Transverse colon (tissue), 4 donors: ENCODE measurements at regions of chr3 and their contacts with region 1.

Region 1: GRCh38 chr3:197256836-197257444 is 41.5 kb downstream of the DLG1 start:
- DNase-seq: peak; percentile 19
- H3K4me3 ChIP-seq: no peak overlapping the region
- H3K27ac ChIP-seq: no peak overlapping the region
- H3K4me1 ChIP-seq: peaks cover 0 to 28% (median 13%) of the 10 kb centered on the region in 4 donors
- H3K27me3 ChIP-seq: no peaks in the 10 kb centered on the region
- CTCF ChIP-seq: peak; percentile 55 to 74 (median 71)
- EP300 ChIP-seq: no peak
- POLR2A ChIP-seq: no peak

Region 2: GRCh38 chr3:197501879-197502620 is 245.1 kb after region 1 on chr3:
- in situ Hi-C with region 1: loop called in 3 of 4 experiments (anchors 5 to 25 kb)
- intact Hi-C with region 1: no loop called
- DNase-seq: peak; percentile 88
- H3K4me3 ChIP-seq: no peak overlapping the region
- H3K27ac ChIP-seq: peak overlapping the region; percentile 71 to 83 (median 81)
- H3K4me1 ChIP-seq: peaks cover 9 to 57% (median 47%) of the 10 kb centered on the region in 4 donors
- H3K27me3 ChIP-seq: no peaks in the 10 kb centered on the region
- CTCF ChIP-seq: peak; percentile 57 to 92 (median 68)
- EP300 ChIP-seq: no peak
- POLR2A ChIP-seq: no peak

Region 3: GRCh38 chr3:197511130-197511529 is 254.2 kb after region 1 on chr3:
- in situ Hi-C with region 1: loop called in 3 of 4 experiments (anchors 10 to 25 kb)
- intact Hi-C with region 1: loop called (anchors 2 kb)
- DNase-seq: no peak
- H3K4me3 ChIP-seq: no peak overlapping the region
- H3K27ac ChIP-seq: no peak overlapping the region
- H3K4me1 ChIP-seq: peaks cover 0 to 9% (median 7%) of the 10 kb centered on the region in 4 donors
- H3K27me3 ChIP-seq: no peaks in the 10 kb centered on the region
- CTCF ChIP-seq: no peak
- EP300 ChIP-seq: no peak
- POLR2A ChIP-seq: no peak

Region 4: GRCh38 chr3:197516517-197516889 is 259.6 kb after region 1 on chr3:
- in situ Hi-C with region 1: loop called in 2 of 4 experiments (anchors 10 to 25 kb)
- intact Hi-C with region 1: loop called (anchors 2 kb)
- DNase-seq: no peak
- H3K4me3 ChIP-seq: no peak overlapping the region
- H3K27ac ChIP-seq: no peak overlapping the region
- H3K4me1 ChIP-seq: peaks cover 12 to 25% (median 22%) of the 10 kb centered on the region in 4 donors
- H3K27me3 ChIP-seq: no peaks in the 10 kb centered on the region
- CTCF ChIP-seq: no peak
- EP300 ChIP-seq: no peak
- POLR2A ChIP-seq: no peak